Gastrocnemius medialis (tissue), 4 donors: ENCODE measurements at regions of chr13 and their contacts with region 1.

Region 1: GRCh38 chr13:41132512-41133152 is at the start of gene KBTBD6:
- DNase-seq: peak; percentile 95 to 96
- ATAC-seq: peak; percentile 97
- H3K4me3 ChIP-seq: peak within 1 kb of the TSS; percentile 81 to 88 (median 83)
- H3K27ac ChIP-seq: peak within 1 kb of the TSS; percentile 92 to 94 (median 94)
- H3K4me1 ChIP-seq: peaks cover 47 to 50% of the 10 kb centered on the region in 2 donors
- H3K27me3 ChIP-seq: no peaks in the 10 kb centered on the region
- CTCF ChIP-seq: no peak
- POLR2A ChIP-seq: peak; percentile 65 to 72
- total RNA-seq, gene KBTBD6: 3.7 to 6.1 (median 5.3) TPM

Region 2: DNA sequence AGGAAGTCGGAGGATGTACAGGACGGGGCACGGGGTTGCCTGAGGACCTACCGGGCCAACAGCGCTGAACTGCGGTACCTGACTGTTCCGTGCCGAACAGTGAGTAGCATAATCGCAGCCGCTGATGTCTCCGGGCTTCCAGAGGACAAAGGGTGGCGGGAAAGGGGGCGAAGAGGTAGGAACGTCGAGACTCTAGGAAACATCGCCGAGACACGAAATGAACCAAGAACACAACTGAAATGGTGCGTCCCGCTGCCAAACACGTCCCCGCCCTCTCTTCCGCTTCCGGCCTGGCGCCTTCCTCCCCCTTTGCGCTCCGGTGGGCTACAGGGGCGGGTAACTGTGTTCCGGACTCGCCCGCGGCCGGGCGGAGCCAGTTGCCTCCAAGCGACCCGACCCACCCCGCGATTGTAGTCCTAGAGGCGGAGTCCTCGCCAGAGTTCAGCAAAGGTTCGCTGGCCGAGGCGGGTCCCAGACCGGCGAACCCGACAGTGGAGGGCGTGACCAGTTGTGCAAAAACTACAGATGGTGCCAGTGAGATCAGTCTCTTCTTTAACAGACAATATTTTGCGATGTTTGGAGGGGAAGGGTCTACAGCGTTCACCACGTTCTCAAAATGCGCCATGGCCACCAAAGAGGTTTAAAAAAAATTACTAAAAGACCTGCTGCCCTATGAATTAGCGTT is 361.6 kb before region 1 on chr13 and contains the start of gene MRPS31:
- in situ Hi-C with region 1: no loop called
- intact Hi-C with region 1: loop called (anchors 2 kb)
- DNase-seq: peak; percentile 89 to 94
- ATAC-seq: peak; percentile 93 to 97
- H3K4me3 ChIP-seq: peak within 1 kb of the TSS; percentile 74 to 95 (median 90)
- H3K27ac ChIP-seq: peak within 1 kb of the TSS; percentile 77 to 93 (median 90)
- H3K4me1 ChIP-seq: peaks cover 12 to 23% of the 10 kb centered on the region in 2 donors
- H3K27me3 ChIP-seq: no peaks in the 10 kb centered on the region
- CTCF ChIP-seq: peak in 2 of 5 experiments; percentile 11 to 30
- POLR2A ChIP-seq: peak; percentile 55 to 61
- total RNA-seq, gene MRPS31: 21.0 to 29.5 (median 24.8) TPM

Region 3: DNA sequence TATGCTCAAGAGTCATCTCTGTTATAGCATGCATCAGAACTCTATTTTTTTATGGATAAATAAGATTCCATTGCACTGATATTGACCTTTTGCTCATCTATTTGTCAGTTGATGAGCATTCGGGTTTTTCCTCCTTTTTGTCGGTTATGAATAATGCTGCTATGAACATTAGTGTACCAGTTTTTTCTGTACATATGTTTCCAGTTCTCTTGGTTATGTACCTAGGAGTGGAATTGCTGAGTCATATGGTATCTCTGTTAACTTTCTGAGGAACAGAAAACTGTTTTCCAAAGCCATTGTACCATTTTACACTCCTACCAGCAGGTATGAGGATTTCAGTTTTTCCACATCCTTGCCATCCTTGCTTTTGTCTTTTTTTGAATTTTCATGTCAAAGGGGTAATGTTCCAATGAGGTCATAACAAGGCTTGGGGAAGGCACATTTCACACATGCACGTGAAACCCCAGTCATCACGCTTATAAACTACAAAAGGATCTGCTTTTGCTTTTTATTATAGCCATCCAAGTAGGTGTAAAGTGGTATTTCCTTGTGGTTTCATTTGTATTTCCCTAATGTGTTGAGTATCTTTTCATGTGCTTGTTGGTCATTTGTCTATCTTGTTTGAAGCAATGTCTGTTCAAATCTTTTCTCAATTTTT is 47.1 kb after region 1 on chr13:
- in situ Hi-C with region 1: loop called in 2 of 4 experiments (anchors 10 kb)
- intact Hi-C with region 1: no loop called
- DNase-seq: no peak
- ATAC-seq: no peak
- H3K4me3 ChIP-seq: no peak overlapping the region
- H3K27ac ChIP-seq: no peak overlapping the region
- H3K4me1 ChIP-seq: no peaks in the 10 kb centered on the region
- H3K27me3 ChIP-seq: no peaks in the 10 kb centered on the region
- CTCF ChIP-seq: no peak
- POLR2A ChIP-seq: no peak

Region 4: DNA sequence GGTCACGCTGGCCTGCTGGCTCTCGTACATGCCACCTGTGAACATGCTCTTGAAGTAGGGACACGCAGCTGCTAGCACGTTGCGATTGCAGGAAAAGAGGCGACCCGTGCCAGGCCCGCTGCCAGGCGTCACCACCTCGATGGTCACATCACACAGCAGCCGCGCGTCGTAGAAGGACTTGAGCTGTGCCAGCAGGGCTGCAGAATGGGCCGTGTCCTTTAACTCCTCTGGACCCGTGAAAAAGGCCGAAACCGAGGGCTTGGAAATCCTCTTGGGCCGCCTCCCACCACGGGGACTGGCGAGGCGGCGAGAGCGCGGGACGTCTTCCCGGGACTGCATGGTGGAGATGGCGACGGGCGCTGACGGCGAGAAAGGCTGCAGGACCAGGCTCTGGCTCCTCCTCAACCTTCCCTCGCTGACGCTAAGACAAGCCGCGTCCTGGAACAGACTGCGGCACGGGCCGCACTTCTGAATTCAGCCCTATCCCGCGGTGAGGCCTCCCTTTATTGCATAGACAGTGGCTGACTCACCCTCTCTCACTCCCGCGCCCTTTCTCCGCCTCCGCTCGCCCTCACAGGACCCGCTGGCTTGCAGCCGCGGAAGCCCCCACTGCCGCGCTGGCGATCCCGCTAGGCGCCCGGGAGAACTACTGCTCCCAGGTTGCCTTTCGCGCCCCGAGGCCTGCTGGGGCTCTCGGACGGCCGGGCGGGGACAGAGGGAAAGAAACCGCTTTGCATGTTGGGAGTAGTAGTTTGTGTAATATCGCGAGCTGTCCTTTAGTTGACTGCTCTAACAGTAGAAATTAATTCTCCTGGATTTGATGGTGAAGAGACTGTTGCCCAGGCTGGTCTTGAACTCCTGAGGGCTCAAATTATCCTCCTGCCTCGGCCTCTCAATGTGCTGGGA is 61.5 kb after region 1 on chr13 and contains the start of gene KBTBD7:
- in situ Hi-C with region 1: loop called (anchors 5 to 10 kb)
- intact Hi-C with region 1: loop called (anchors 1 kb)
- DNase-seq: peak; percentile 90 to 93
- ATAC-seq: peak; percentile 96 to 97
- H3K4me3 ChIP-seq: peak within 1 kb of the TSS; percentile 82 to 90 (median 87)
- H3K27ac ChIP-seq: peak within 1 kb of the TSS; percentile 89 to 94 (median 92)
- H3K4me1 ChIP-seq: peaks cover 26 to 31% of the 10 kb centered on the region in 2 donors
- H3K27me3 ChIP-seq: no peaks in the 10 kb centered on the region
- CTCF ChIP-seq: peak in 1 of 5 experiments; percentile 29
- POLR2A ChIP-seq: peak; percentile 56 to 79
- total RNA-seq, gene KBTBD7: 2.3 to 5.6 (median 5.3) TPM

Region 5: GRCh38 chr13:41263261-41264027 is 130.8 kb after region 1 on chr13 and contains the start of gene MTRF1:
- in situ Hi-C with region 1: loop called in 1 of 4 experiments (anchors 10 kb)
- intact Hi-C with region 1: loop called (anchors 1 kb)
- DNase-seq: peak; percentile 68 to 70
- ATAC-seq: peak; percentile 98 to 99
- H3K4me3 ChIP-seq: peak within 1 kb of the TSS; percentile 77 to 87 (median 82)
- H3K27ac ChIP-seq: peak within 1 kb of the TSS; percentile 83 to 91 (median 90)
- H3K4me1 ChIP-seq: peaks cover 8% of the 10 kb centered on the region in 2 donors
- H3K27me3 ChIP-seq: no peaks in the 10 kb centered on the region
- CTCF ChIP-seq: no peak
- POLR2A ChIP-seq: peak in 1 of 2 donors; percentile 42
- total RNA-seq, gene MTRF1: 8.2 to 16.7 (median 13.3) TPM